ENCODE measurements at regions of chr5 and their contacts with region 1.

Region 1: GRCh38 chr5:96067894-96068614 is 106.4 kb upstream of the ELL2 start:
- DNase-seq: peak; percentile 47 to 73
- H3K4me3 ChIP-seq: no peak overlapping the region
- H3K4me3 Mint-ChIP-seq: no peak overlapping the region
- H3K27ac Mint-ChIP-seq: peak overlapping the region; percentile 69
- H3K4me1 ChIP-seq: peaks cover 29% of the 10 kb centered on the region
- H3K4me1 Mint-ChIP-seq: peaks cover 34% of the 10 kb centered on the region
- H3K27me3 ChIP-seq: no peaks in the 10 kb centered on the region
- H3K27me3 Mint-ChIP-seq: no peaks in the 10 kb centered on the region
- CTCF ChIP-seq: no peak

Region 2: GRCh38 chr5:96017951-96018350 is 50.1 kb before region 1 on chr5:
- CTCF ChIA-PET with region 1: no interaction called
- POLR2A ChIA-PET with region 1: no interaction called
- intact Hi-C with region 1: no loop called
- DNase-seq: no peak
- H3K4me3 ChIP-seq: no peak overlapping the region
- H3K4me3 Mint-ChIP-seq: no peak overlapping the region
- H3K27ac Mint-ChIP-seq: no peak overlapping the region
- H3K4me1 ChIP-seq: peaks cover 32% of the 10 kb centered on the region
- H3K4me1 Mint-ChIP-seq: peaks cover 7% of the 10 kb centered on the region
- H3K27me3 ChIP-seq: no peaks in the 10 kb centered on the region
- H3K27me3 Mint-ChIP-seq: no peaks in the 10 kb centered on the region
- CTCF ChIP-seq: no peak

Region 3: GRCh38 chr5:96054311-96055030 is 13.6 kb before region 1 on chr5:
- CTCF ChIA-PET with region 1: no interaction called
- POLR2A ChIA-PET with region 1: no interaction called
- intact Hi-C with region 1: loop called (anchors 1 kb)
- DNase-seq: no peak
- H3K4me3 ChIP-seq: no peak overlapping the region
- H3K4me3 Mint-ChIP-seq: no peak overlapping the region
- H3K27ac Mint-ChIP-seq: no peak overlapping the region
- H3K4me1 ChIP-seq: no peaks in the 10 kb centered on the region
- H3K4me1 Mint-ChIP-seq: no peaks in the 10 kb centered on the region
- H3K27me3 ChIP-seq: no peaks in the 10 kb centered on the region
- H3K27me3 Mint-ChIP-seq: no peaks in the 10 kb centered on the region
- CTCF ChIP-seq: no peak

Measured in Caco-2 (cell line).